ENCODE measurements at regions of chr15 and their contacts with region 1.

Region 1: GRCh38 chr15:94163999-94164807 is 67.2 kb upstream of the MCTP2 start:
- DNase-seq: peak; percentile 63
- H3K4me3 ChIP-seq: no peak overlapping the region
- H3K27ac ChIP-seq: no peak overlapping the region
- H3K4me1 ChIP-seq: peaks cover 0 to 2% (median 0%) of the 10 kb centered on the region in 4 donors
- H3K27me3 ChIP-seq: peaks cover 3% of the 10 kb centered on the region
- CTCF ChIP-seq: peak; percentile 84 to 93 (median 87)
- EP300 ChIP-seq: no peak
- POLR2A ChIP-seq: no peak

Region 2: DNA sequence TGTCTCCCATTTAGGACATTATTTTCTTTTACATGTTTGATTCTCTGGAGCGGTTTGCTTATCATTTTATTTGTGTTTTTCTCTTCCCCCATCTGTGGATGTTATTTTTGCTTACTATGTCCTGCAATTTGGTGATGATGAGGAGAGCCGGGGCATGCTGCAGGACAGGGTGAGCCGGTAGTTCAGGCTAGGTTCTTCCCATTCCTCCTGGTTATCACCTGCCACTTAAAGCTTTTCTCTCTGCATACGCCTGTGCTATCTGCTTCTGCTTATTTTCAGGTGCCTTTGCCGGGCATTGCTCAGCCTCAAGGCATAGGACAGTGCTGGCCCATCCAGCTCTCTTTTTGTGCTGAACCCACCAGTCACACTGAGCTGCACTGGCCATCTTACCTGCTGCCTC is 153.0 kb after region 1 on chr15:
- in situ Hi-C with region 1: loop called (anchors 5 to 10 kb)
- intact Hi-C with region 1: no loop called
- DNase-seq: no peak
- H3K4me3 ChIP-seq: no peak overlapping the region
- H3K27ac ChIP-seq: no peak overlapping the region
- H3K4me1 ChIP-seq: peaks cover 0 to 10% (median 7%) of the 10 kb centered on the region in 4 donors
- H3K27me3 ChIP-seq: no peaks in the 10 kb centered on the region
- CTCF ChIP-seq: no peak
- EP300 ChIP-seq: no peak
- POLR2A ChIP-seq: no peak

Region 3: DNA sequence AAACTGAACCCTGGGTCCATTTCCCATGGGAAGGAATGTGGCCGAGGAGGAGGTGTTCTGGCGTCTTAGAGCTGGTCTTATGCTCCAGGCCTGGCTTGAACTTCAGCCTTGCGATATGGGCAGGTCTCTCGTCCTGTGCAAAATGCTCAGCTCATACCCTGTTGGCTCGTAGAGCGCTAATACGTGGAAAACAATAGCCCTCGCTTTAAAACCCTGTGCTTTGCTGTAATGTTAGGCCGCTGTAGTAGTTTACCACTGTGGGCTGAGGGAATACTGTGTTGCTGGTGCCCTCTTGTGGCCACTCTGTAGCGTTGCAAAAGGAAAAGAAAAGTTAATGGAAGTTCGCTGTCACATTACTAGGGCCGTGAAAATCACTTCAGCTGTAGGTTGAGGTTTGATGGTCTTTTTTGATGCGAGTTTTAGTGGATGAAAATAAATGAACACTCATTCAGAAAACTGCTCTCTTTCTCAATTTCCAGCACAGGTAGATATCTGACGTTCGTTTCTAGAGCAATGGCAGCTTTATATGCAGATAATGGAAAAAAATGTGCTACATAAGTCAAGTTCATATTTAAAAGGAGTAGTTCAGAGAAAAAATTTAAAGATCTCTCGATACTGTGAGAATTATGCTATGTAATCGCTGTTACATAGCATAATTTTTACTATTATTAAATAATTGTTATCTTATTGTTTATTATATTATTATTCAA is 160.1 kb after region 1 on chr15:
- in situ Hi-C with region 1: loop called (anchors 5 to 10 kb)
- intact Hi-C with region 1: loop called (anchors 5 kb)
- DNase-seq: peak; percentile 68
- H3K4me3 ChIP-seq: no peak overlapping the region
- H3K27ac ChIP-seq: peak overlapping the region in 2 of 4 donors; percentile 53 to 64
- H3K4me1 ChIP-seq: peaks cover 7 to 34% (median 22%) of the 10 kb centered on the region in 4 donors
- H3K27me3 ChIP-seq: no peaks in the 10 kb centered on the region
- CTCF ChIP-seq: peak; percentile 86 to 94 (median 91)
- EP300 ChIP-seq: no peak
- POLR2A ChIP-seq: no peak